CD4-positive, alpha-beta memory T cell (primary cell): ENCODE measurements at regions of chr5 and their contacts with region 1.

Region 1: DNA sequence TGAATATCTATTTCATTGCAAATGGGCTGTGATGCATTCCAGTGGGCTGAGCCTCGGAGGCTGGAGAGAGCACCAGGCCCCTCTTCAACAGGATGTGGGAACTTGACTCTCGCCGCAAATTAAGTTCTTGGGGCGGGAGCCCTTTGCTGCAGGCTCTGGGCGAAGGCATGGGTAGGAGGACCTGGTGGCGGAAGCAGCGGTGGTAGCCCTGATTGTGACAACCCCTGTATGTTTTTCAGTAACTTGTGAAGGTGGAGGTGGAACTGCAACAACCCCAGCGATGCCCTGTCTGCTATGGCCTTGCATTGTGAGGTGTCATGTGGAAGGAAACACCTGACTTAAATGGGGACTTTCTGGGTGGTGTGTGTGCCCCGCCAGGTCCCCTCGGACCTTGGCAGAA is 9.4 kb downstream of the FYB1 start:
- DNase-seq: peak; percentile 87 to 93 (median 88)
- H3K4me3 ChIP-seq: peak overlapping the region; percentile 45 to 48
- H3K4me3 Mint-ChIP-seq: peak overlapping the region; percentile 76 to 85 (median 84)
- H3K27ac ChIP-seq: peak overlapping the region; percentile 84
- H3K27ac Mint-ChIP-seq: peak overlapping the region; percentile 91 to 98 (median 95)
- H3K4me1 ChIP-seq: peaks cover 98% of the 10 kb centered on the region
- H3K4me1 Mint-ChIP-seq: peaks cover 68 to 100% (median 88%) of the 10 kb centered on the region in 4 donors
- H3K27me3 ChIP-seq: no peaks in the 10 kb centered on the region
- H3K27me3 Mint-ChIP-seq: no peaks in the 10 kb centered on the region

Region 2: GRCh38 chr5:38807570-38808483 is 402.1 kb before region 1 on chr5:
- CTCF ChIA-PET with region 1: no interaction called
- POLR2A ChIA-PET with region 1: no interaction called
- intact Hi-C with region 1: no loop called
- DNase-seq: no peak
- H3K4me3 ChIP-seq: no peak overlapping the region
- H3K4me3 Mint-ChIP-seq: no peak overlapping the region
- H3K27ac ChIP-seq: no peak overlapping the region
- H3K27ac Mint-ChIP-seq: no peak overlapping the region
- H3K4me1 ChIP-seq: no peaks in the 10 kb centered on the region
- H3K4me1 Mint-ChIP-seq: peaks cover 0 to 3% (median 0%) of the 10 kb centered on the region in 4 donors
- H3K27me3 ChIP-seq: no peaks in the 10 kb centered on the region
- H3K27me3 Mint-ChIP-seq: peaks cover 10 to 19% of the 10 kb centered on the region in 2 donors

Region 3: GRCh38 chr5:39194466-39195136 is 15.3 kb before region 1 on chr5:
- CTCF ChIA-PET with region 1: interaction called, 79 read pairs
- POLR2A ChIA-PET with region 1: interaction called, 534 read pairs
- intact Hi-C with region 1: no loop called
- DNase-seq: no peak
- H3K4me3 ChIP-seq: peak overlapping the region; percentile 13 to 49
- H3K4me3 Mint-ChIP-seq: peak overlapping the region; percentile 84 to 92 (median 88)
- H3K27ac ChIP-seq: peak overlapping the region; percentile 59
- H3K27ac Mint-ChIP-seq: peak overlapping the region; percentile 90 to 98 (median 95)
- H3K4me1 ChIP-seq: peaks cover 77% of the 10 kb centered on the region
- H3K4me1 Mint-ChIP-seq: peaks cover 53 to 79% (median 66%) of the 10 kb centered on the region in 4 donors
- H3K27me3 ChIP-seq: no peaks in the 10 kb centered on the region
- H3K27me3 Mint-ChIP-seq: no peaks in the 10 kb centered on the region

Region 4: DNA sequence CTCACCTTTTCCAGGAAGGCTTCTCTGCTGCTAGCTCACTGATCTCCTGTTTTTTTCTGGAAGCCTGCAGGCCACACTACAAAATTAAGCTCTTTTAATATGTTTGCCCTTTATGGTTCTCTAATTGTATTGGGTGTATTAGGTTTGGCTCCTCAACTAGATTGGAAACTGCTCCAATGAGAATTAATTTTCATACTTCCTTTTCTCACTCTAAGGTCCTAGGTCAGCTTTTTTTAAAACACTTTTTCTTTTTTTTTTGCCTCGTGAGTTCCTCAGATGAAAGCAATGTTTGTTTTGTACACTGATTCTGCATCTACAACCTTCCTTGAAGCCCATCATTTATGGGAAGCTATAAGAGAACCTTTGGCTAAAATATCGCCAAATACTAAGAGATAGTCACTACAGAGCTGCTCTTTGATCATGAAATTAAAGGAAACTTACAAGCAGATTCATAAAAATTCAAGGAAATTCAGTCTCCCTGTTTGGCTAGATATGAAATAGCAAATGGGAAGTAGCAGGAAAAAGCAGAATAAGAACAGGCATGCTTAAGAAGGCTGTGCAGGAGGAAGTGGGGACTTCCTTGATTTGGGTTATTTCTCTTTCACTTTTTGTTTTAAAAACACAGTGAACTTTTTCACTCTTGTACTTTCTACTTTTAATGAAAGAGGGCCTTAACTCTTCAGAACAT is 64.6 kb after region 1 on chr5:
- CTCF ChIA-PET with region 1: interaction called, 7 read pairs
- POLR2A ChIA-PET with region 1: interaction called, 19 read pairs
- intact Hi-C with region 1: no loop called
- DNase-seq: peak; percentile 36 to 53 (median 41)
- H3K4me3 ChIP-seq: peak overlapping the region; percentile 20 to 25
- H3K4me3 Mint-ChIP-seq: peak overlapping the region; percentile 72 to 89 (median 85)
- H3K27ac ChIP-seq: peak overlapping the region; percentile 73
- H3K27ac Mint-ChIP-seq: peak overlapping the region; percentile 90 to 98 (median 96)
- H3K4me1 ChIP-seq: peaks cover 54% of the 10 kb centered on the region
- H3K4me1 Mint-ChIP-seq: peaks cover 37 to 71% (median 51%) of the 10 kb centered on the region in 4 donors
- H3K27me3 ChIP-seq: no peaks in the 10 kb centered on the region
- H3K27me3 Mint-ChIP-seq: no peaks in the 10 kb centered on the region